ENCODE measurements at regions of chr10 and their contacts with region 1.

Region 1: DNA sequence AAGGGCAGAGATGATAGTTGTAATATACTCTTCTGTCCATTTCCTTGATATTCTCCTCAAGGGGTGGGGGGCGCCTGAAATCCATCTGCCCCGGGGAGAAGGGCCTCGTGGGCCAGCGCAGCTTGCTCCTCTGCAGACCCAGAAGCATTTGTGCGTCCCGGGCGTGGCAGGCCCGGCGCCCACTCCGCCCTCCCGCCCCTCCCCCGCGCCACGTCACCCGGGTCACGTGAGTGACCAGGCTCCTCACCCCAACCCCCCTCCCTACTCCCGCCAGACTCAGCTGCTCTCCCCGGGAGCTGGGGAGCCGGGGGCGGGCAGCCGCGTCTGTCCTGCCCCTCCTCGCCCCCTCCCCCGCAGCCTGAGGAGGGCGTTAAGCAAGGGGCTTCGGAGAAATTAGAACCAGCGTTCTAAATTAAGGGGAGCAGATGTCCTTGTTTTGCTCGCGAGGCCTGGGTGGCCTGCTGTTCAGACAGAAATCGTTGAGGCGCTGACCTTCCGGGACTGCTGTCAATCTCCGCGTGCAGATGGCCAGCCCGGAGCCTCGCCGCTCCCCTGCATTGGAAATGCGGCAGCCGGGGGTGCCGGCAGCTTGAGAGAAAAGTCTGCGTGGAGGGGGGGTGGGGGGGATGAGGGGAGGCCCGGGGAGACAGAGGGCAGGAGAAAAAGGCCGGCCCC is 102.1 kb upstream of the ZNF438 start:
- DNase-seq: peak; percentile 14 to 67 (median 38)
- ATAC-seq: peak; percentile 78
- H3K4me3 ChIP-seq: peak overlapping the region; percentile 66
- H3K4me3 Mint-ChIP-seq: peak overlapping the region; percentile 71 to 87 (median 82)
- H3K27ac ChIP-seq: peak overlapping the region; percentile 80
- H3K27ac Mint-ChIP-seq: peak overlapping the region; percentile 72 to 92 (median 87)
- H3K4me1 ChIP-seq: peaks cover 0 to 33% of the 10 kb centered on the region in 2 donors
- H3K4me1 Mint-ChIP-seq: peaks cover 18 to 68% (median 44%) of the 10 kb centered on the region in 7 donors
- H3K27me3 ChIP-seq: no peaks in the 10 kb centered on the region
- H3K27me3 Mint-ChIP-seq: no peaks in the 10 kb centered on the region

Region 2: GRCh38 chr10:30701451-30702173 is 432.2 kb before region 1 on chr10:
- CTCF ChIA-PET with region 1: no interaction called
- POLR2A ChIA-PET with region 1: no interaction called
- intact Hi-C with region 1: loop called (anchors 5 kb)
- DNase-seq: peak in 8 of 9 donors; percentile 68 to 81 (median 74)
- ATAC-seq: peak; percentile 80
- H3K4me3 ChIP-seq: peak overlapping the region; percentile 31
- H3K4me3 Mint-ChIP-seq: peak overlapping the region; percentile 68 to 98 (median 88)
- H3K27ac ChIP-seq: peak overlapping the region; percentile 86
- H3K27ac Mint-ChIP-seq: peak overlapping the region; percentile 88 to 98 (median 96)
- H3K4me1 ChIP-seq: peaks cover 63 to 74% of the 10 kb centered on the region in 2 donors
- H3K4me1 Mint-ChIP-seq: peaks cover 51 to 97% (median 88%) of the 10 kb centered on the region in 7 donors
- H3K27me3 ChIP-seq: no peaks in the 10 kb centered on the region
- H3K27me3 Mint-ChIP-seq: no peaks in the 10 kb centered on the region

Region 3: GRCh38 chr10:31101123-31101522 is 32.6 kb before region 1 on chr10:
- CTCF ChIA-PET with region 1: no interaction called
- POLR2A ChIA-PET with region 1: no interaction called
- intact Hi-C with region 1: loop called in 1 of 2 experiments (anchors 1 kb)
- DNase-seq: peak in 1 of 9 donors; percentile 74
- ATAC-seq: peak; percentile 58
- H3K4me3 ChIP-seq: no peak overlapping the region
- H3K4me3 Mint-ChIP-seq: peak overlapping the region in 1 of 10 donors; percentile 85
- H3K27ac ChIP-seq: no peak overlapping the region
- H3K27ac Mint-ChIP-seq: peak overlapping the region in 3 of 9 donors; percentile 28 to 95 (median 29)
- H3K4me1 ChIP-seq: no peaks in the 10 kb centered on the region
- H3K4me1 Mint-ChIP-seq: peaks cover 0 to 66% (median 4%) of the 10 kb centered on the region in 7 donors
- H3K27me3 ChIP-seq: no peaks in the 10 kb centered on the region
- H3K27me3 Mint-ChIP-seq: peaks cover 0 to 4% (median 0%) of the 10 kb centered on the region in 5 donors

Region 4: DNA sequence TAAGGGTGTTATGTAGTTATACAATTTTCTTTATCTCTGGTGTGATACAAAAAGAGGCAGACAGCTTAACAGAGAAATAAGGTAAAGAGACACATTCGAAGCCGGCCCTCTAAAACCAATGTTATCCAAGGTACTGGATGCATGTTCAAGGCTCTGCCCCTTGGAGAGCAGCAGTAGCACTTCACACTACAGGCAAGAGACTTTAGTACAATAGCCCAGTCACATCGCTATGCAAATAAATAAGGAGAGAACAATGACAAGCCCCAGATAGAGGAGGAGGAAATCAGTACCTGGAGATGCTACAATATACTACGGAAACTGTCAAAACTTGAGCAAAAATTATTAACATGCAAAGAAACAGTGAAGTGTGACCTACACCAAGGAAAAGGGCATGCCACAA is 1713.2 kb after region 1 on chr10:
- CTCF ChIA-PET with region 1: no interaction called
- POLR2A ChIA-PET with region 1: no interaction called
- intact Hi-C with region 1: no loop called
- DNase-seq: no peak
- ATAC-seq: no peak
- H3K4me3 ChIP-seq: no peak overlapping the region
- H3K4me3 Mint-ChIP-seq: no peak overlapping the region
- H3K27ac ChIP-seq: no peak overlapping the region
- H3K27ac Mint-ChIP-seq: no peak overlapping the region
- H3K4me1 ChIP-seq: no peaks in the 10 kb centered on the region
- H3K4me1 Mint-ChIP-seq: peaks cover 0 to 3% (median 0%) of the 10 kb centered on the region in 7 donors
- H3K27me3 ChIP-seq: no peaks in the 10 kb centered on the region
- H3K27me3 Mint-ChIP-seq: no peaks in the 10 kb centered on the region